Transverse colon (tissue), 4 donors: ENCODE measurements at regions of chr5 and their contacts with region 1.

Region 1: GRCh38 chr5:41856644-41857491 is 13.4 kb downstream of the OXCT1 start:
- DNase-seq: peak; percentile 26
- H3K4me3 ChIP-seq: no peak overlapping the region
- H3K27ac ChIP-seq: no peak overlapping the region
- H3K4me1 ChIP-seq: no peaks in the 10 kb centered on the region
- H3K27me3 ChIP-seq: no peaks in the 10 kb centered on the region
- CTCF ChIP-seq: peak; percentile 60 to 82 (median 76)
- EP300 ChIP-seq: no peak
- POLR2A ChIP-seq: no peak

Region 2: DNA sequence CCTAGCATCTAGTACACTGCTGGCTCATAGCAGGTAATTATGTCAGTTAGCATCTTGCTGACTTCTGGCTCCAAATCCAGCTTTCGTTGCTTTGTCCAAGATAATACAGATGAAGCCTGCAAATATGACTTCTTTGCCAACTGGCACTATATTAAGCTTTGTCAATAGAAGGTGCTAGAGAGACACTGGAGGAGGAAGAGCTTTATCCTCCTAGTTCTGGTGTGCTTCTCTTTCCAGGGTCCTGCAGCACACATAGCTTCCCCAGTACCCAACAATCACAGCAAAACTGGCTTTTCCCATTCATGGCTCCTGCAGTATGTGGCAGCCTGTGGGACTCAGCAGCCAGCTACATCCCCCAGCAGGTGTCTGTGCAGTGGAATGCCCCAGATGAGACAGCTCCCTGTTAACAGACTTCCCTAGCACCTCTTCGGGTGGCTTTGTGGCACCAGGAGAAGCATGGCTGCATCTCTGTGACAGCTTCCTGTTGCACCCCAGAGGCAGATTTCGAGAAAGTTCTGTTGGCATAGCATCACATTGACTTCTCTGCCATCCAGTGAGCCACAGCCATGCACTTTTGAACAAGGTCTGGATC is 134.4 kb before region 1 on chr5:
- in situ Hi-C with region 1: no loop called
- intact Hi-C with region 1: no loop called
- DNase-seq: no peak
- H3K4me3 ChIP-seq: no peak overlapping the region
- H3K27ac ChIP-seq: no peak overlapping the region
- H3K4me1 ChIP-seq: peaks cover 0 to 7% (median 2%) of the 10 kb centered on the region in 4 donors
- H3K27me3 ChIP-seq: no peaks in the 10 kb centered on the region
- CTCF ChIP-seq: no peak
- EP300 ChIP-seq: no peak
- POLR2A ChIP-seq: no peak

Region 3: GRCh38 chr5:41935544-41935943 is 78.7 kb after region 1 on chr5:
- in situ Hi-C with region 1: no loop called
- intact Hi-C with region 1: loop called (anchors 10 kb)
- DNase-seq: no peak
- H3K4me3 ChIP-seq: no peak overlapping the region
- H3K27ac ChIP-seq: no peak overlapping the region
- H3K4me1 ChIP-seq: no peaks in the 10 kb centered on the region
- H3K27me3 ChIP-seq: no peaks in the 10 kb centered on the region
- CTCF ChIP-seq: no peak
- EP300 ChIP-seq: no peak
- POLR2A ChIP-seq: no peak

Region 4: GRCh38 chr5:42057254-42057690 is 200.4 kb after region 1 on chr5:
- in situ Hi-C with region 1: loop called in 2 of 4 experiments (anchors 5 kb)
- intact Hi-C with region 1: no loop called
- DNase-seq: peak; percentile 33
- H3K4me3 ChIP-seq: no peak overlapping the region
- H3K27ac ChIP-seq: no peak overlapping the region
- H3K4me1 ChIP-seq: no peaks in the 10 kb centered on the region
- H3K27me3 ChIP-seq: no peaks in the 10 kb centered on the region
- CTCF ChIP-seq: peak; percentile 51 to 63 (median 60)
- EP300 ChIP-seq: no peak
- POLR2A ChIP-seq: no peak

Region 5: GRCh38 chr5:42423285-42424165 is 566.7 kb after region 1 on chr5 and contains the start of gene GHR:
- in situ Hi-C with region 1: no loop called
- intact Hi-C with region 1: loop called (anchors 10 kb)
- DNase-seq: peak; percentile 82
- H3K4me3 ChIP-seq: peak within 1 kb of the TSS; percentile 47 to 67 (median 50)
- H3K27ac ChIP-seq: peak within 1 kb of the TSS; percentile 76 to 91 (median 86)
- H3K4me1 ChIP-seq: peaks cover 0 to 30% (median 5%) of the 10 kb centered on the region in 4 donors
- H3K27me3 ChIP-seq: peaks cover 7% of the 10 kb centered on the region
- CTCF ChIP-seq: peak; percentile 69 to 85 (median 79)
- EP300 ChIP-seq: no peak
- POLR2A ChIP-seq: no peak
- total RNA-seq, gene GHR: 0.40 to 11.6 (median 7.6) TPM